Cardiac septum (tissue), 1 donor: ENCODE measurements at regions of chr2 and their contacts with region 1.

Region 1: GRCh38 chr2:219642465-219643080 is 15.1 kb downstream of the SLC4A3 start:
- DNase-seq: peak; percentile 97

Region 2: GRCh38 chr2:219530048-219530963 is 112.3 kb before region 1 on chr2:
- intact Hi-C with region 1: no loop called
- DNase-seq: peak; percentile 95

Region 3: DNA sequence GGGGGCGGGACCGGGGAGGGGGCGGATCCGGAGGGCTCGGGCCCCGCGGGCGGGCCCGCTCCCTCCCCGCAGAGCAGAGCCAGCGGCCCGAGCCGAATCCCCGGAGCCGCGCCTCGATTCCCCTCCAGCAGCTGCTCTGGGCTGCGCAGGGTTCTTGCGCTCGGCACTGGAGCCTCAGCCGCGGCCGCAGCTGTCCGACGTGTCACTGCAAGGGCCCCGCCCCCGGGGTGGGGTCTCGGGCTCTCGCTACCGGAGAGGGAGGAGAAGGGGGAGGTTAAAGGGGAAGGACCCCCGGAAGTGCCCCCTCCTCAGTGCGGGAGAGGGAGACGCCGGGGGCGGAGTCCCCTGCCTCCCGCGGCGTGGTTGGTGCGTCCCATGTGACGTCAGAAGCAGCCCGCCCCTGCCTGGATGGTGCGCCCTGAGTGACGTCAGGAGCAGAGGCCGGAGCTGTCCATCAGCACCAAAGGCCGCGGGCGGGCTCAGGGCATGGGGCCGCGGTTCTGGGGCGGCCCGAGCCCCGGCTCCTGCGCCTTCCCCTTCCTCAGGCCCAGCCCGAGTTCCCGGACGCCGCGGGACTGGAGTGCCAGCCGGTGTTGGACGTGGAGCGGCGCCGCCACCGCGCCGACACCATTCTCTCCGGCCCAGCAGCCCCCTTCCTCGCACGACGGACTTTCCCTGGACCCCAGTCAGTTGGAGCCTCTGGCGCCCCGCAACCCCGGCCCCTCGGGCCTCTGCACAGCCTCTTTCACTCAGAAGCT is 98.8 kb before region 1 on chr2 and contains the starts of genes CHPF and TMEM198:
- intact Hi-C with region 1: loop called (anchors 1 kb)
- DNase-seq: peak; percentile 97
- total RNA-seq, gene CHPF: 120 TPM
- total RNA-seq, gene TMEM198: 1.8 TPM

Region 4: GRCh38 chr2:219571311-219572236 is 71.0 kb before region 1 on chr2 and contains the start of gene OBSL1:
- intact Hi-C with region 1: loop called (anchors 1 kb)
- DNase-seq: peak; percentile 89
- total RNA-seq, gene OBSL1: 199 TPM

Region 5: GRCh38 chr2:219616550-219616949 is 26.0 kb before region 1 on chr2:
- intact Hi-C with region 1: loop called (anchors 1 kb)
- DNase-seq: no peak

Region 6: GRCh38 chr2:219689676-219690628 is 47.4 kb after region 1 on chr2:
- intact Hi-C with region 1: loop called (anchors 2 kb)
- DNase-seq: no peak

Region 7: DNA sequence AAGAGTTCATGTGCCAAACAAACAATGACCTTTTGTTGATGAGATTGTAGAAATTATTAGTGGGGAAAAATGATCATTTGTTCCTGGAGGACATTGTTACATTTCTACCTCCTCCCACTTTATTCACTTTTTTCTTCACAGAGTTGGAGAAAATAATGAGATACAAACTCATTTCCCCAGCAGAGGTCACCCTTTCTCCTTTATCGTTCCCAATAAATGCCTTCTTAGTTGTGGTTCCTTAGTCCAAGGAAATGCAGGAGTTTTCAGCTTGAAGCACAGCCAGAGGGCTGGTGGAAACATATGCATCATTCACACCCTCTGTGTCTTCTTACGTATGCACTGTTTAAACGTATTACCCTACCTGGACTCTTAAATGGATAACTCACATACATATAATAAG is 93.6 kb after region 1 on chr2:
- intact Hi-C with region 1: no loop called
- DNase-seq: no peak